ENCODE measurements at regions of chr3 and their contacts with region 1.

Region 1: GRCh38 chr3:10192953-10193691 is 28.4 kb downstream of the IRAK2 start:
- DNase-seq: peak; percentile 68
- H3K4me3 ChIP-seq: no peak overlapping the region
- H3K27ac ChIP-seq: peak overlapping the region; percentile 98
- H3K27me3 ChIP-seq: no peaks in the 10 kb centered on the region
- CTCF ChIP-seq: peak; percentile 82

Region 2: GRCh38 chr3:8663177-8664061 is 1529.7 kb before region 1 on chr3:
- CTCF ChIA-PET with region 1: no interaction called
- POLR2A ChIA-PET with region 1: no interaction called
- DNase-seq: peak; percentile 23
- H3K4me3 ChIP-seq: no peak overlapping the region
- H3K27ac ChIP-seq: no peak overlapping the region
- H3K27me3 ChIP-seq: no peaks in the 10 kb centered on the region
- CTCF ChIP-seq: peak; percentile 68

Region 3: DNA sequence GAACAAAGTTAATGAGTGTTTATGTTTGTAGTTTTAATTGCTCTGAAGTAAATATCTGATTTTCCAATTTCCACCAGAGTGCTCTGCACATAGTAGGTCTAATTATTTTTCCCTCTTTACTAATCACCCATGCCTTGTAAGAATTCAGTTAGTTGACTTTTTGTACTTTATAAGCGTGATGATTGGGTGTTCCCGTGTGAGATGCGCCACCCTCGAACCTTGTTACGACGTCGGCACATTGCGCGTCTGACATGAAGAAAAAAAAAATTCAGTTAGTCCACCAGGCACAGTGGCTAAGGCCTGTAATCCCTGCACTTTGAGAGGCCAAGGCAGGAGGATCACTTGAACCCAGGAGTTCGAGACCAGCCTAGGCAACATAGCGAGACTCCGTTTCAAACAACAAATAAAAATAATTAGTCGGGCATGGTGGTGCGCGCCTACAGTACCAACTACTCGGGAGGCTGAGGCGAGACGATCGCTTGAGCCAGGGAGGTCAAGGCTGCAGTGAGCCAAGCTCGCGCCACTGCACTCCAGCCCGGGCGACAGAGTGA is 52.1 kb before region 1 on chr3:
- CTCF ChIA-PET with region 1: interaction called, 4 read pairs
- POLR2A ChIA-PET with region 1: interaction called, 10 read pairs
- DNase-seq: no peak
- H3K4me3 ChIP-seq: peak overlapping the region; percentile 27; the same call in 1 of the 2 replicates
- H3K27ac ChIP-seq: no peak overlapping the region
- H3K27me3 ChIP-seq: no peaks in the 10 kb centered on the region
- CTCF ChIP-seq: no peak

Region 4: DNA sequence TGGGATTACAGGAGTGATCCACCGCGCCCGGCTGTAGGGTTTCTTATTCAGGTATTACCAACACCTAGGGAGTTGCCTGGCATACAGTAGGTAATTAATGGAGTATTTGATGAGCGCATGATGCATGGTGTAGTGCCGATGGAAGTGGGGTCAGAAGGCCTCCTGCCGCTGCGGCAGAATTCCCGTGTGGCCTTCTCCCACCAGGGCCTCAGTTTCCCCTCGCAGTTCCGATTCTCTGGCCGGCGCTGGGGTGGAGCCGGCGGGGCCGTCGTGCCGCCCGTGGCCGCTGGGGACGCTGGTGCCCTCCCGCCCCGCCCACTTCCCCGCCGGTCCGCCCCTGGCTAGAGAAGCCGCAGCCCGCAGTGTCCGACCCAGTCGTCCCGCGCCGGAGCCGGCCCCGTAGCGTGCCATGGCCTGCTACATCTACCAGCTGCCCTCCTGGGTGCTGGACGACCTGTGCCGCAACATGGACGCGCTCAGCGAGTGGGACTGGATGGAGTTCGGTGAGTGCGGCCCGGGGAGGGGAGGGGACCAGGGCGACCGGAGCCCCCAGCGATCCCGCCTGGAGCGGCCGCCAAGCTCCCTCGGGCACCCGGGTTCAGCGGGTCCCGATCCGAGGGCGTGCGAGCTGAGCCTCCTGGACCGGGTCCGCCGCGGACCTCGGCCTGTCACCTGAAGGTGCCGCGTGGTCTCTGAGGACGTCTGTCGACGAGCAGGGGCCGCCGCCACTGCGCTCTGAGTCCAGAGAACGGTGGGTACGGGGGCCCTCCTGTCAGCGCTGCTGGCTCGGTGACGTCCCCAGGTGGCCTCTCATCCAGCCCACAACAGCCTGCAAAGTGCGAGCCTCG is 28.4 kb before region 1 on chr3 and contains the start of gene IRAK2:
- CTCF ChIA-PET with region 1: interaction called, 15 read pairs
- POLR2A ChIA-PET with region 1: no interaction called
- DNase-seq: no peak
- H3K4me3 ChIP-seq: peak within 1 kb of the TSS; percentile 90
- H3K27ac ChIP-seq: no peak within 1 kb of the TSS
- H3K27me3 ChIP-seq: no peaks in the 10 kb centered on the region
- CTCF ChIP-seq: peak; percentile 61
- polyA plus RNA-seq, gene IRAK2: 7.6 and 8.9 TPM in 2 replicates

Region 5: DNA sequence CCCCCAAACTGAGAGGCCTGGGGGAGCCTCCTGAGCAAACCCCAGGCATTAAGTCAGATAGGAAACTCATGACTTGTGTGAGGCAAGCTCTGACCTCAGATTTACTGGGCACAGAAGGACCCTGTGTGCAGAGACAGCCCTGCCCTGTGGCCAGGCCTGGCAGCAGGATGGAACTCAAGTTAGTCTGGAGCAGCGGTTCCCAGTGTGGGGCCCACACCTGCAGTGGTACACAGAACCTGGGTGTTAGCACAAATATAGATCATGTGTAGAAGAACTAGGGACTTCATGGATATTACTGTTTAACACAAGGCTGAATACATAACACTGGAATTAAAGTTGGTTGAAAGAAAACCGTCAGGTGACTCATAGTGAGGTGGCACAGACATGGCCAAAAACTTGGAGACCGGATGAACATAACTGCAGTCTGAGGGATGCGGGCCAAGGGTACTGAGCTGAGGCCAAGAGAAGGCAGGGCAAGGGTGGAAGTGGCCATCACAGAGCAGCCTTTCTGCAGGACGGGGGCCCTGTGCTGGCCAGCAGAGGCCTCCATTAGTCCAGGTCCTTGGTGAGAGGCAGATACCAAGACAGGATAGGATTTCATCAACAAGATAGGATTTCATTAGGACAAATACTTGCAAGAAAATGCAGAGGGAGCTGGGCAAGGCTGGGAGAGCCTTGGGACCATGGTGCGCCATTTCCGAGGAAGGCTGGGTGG is 12.5 kb after region 1 on chr3:
- CTCF ChIA-PET with region 1: interaction called, 29 read pairs
- POLR2A ChIA-PET with region 1: interaction called, 32 read pairs
- DNase-seq: no peak
- H3K4me3 ChIP-seq: no peak overlapping the region
- H3K27ac ChIP-seq: peak overlapping the region; percentile 94
- H3K27me3 ChIP-seq: no peaks in the 10 kb centered on the region
- CTCF ChIP-seq: no peak

Region 6: DNA sequence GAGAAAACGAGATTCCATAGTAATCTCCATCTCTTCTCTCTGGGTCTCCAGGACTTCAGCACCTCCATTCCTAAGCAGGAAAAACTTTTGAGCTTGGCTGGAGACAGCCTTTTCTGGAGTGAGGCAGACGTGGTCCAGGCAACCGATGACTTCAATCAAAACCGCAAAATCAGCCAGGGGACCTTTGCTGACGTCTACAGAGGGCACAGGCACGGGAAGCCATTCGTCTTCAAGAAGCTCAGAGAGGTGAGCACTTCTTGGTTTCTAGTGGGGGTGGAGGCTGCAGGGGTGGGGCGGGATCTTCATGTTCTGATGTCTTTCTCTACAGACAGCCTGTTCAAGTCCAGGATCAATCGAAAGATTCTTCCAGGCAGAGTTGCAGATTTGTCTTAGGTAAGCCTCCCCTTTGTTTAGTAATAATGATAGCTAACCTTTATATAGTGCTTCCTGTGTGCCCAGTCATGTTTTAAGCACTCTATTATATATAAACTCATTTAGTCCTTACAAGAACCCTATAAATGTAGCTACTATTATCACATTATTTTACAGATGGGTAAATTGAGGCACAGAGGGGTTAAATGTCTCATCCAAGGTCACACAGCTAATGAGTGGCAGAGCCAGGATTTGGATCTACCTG is 20.2 kb after region 1 on chr3:
- CTCF ChIA-PET with region 1: interaction called, 14 read pairs
- POLR2A ChIA-PET with region 1: no interaction called
- DNase-seq: no peak
- H3K4me3 ChIP-seq: no peak overlapping the region
- H3K27ac ChIP-seq: peak overlapping the region; percentile 3
- H3K27me3 ChIP-seq: no peaks in the 10 kb centered on the region
- CTCF ChIP-seq: no peak

Region 7: DNA sequence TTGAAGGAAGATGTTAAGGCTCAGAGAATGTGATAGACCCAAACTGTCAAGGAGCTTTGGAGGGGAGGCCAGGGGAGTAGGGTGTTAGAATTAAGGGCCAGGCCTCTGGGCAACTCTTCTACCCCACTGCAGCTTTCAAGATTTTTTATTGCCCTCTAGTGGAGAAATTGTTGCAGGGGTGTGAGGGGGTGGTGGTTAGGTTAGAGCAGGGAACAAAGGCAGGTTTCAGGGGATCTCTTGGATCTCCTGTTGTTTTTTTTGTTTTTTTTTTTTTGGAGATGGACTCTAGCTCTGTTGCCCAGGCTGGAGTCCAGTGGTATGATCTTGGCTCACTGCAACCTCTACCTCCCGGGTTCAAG is 129.2 kb after region 1 on chr3:
- CTCF ChIA-PET with region 1: no interaction called
- POLR2A ChIA-PET with region 1: no interaction called
- DNase-seq: no peak
- H3K4me3 ChIP-seq: no peak overlapping the region
- H3K27ac ChIP-seq: no peak overlapping the region
- H3K27me3 ChIP-seq: peaks cover 16% of the 10 kb centered on the region
- CTCF ChIP-seq: peak; percentile 28; the same call in 1 of the 2 replicates

Region 8: DNA sequence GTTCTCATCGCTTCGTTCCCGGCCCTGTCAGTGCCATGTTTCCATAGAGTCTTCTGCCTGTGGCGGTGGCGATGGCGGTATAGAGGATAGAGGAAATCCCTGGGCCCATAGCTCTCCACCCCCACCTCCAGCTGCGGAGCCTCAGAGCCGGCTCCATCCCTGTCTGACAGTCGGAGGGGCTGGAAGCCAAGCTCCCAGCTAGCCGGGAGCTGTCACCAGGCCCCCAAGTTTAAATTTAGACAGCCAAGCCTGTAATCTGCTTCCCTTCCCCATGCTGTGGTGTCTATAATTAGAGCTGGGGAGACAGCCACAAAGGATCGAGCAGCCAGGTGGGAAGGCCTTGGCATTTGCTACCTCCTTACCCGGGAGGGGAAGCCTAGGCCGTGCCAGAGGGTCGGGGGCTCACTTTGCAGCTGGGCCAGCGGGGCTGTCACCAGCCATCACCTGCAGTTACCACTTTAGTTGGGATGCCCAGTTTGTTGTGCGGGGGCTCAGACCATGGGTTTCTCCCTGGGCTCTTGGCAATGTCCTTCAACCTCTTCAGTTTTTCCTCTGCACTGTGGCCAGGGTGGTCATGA is 184.1 kb after region 1 on chr3:
- CTCF ChIA-PET with region 1: no interaction called
- POLR2A ChIA-PET with region 1: no interaction called
- DNase-seq: no peak
- H3K4me3 ChIP-seq: no peak overlapping the region
- H3K27ac ChIP-seq: no peak overlapping the region
- H3K27me3 ChIP-seq: peaks cover 24% of the 10 kb centered on the region
- CTCF ChIP-seq: no peak

Region 9: DNA sequence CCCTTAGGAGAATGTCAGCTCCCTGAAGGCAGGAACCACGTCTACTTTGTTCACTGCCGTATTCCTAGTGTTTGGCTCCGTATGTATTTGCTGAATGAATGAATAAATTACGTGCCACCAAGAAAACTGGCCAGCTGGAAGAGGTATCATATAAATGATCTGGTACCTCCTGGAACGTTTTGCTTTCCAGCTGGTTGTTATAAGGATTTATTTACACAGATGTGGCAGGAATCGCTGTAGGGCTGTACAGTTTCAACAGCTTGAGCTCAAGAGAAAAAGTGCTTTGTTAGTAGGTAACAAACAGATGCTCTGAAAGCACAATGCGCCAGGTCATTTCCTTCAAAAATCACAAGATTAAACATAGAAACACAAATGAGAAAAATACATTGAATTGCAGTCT is 421.0 kb after region 1 on chr3:
- CTCF ChIA-PET with region 1: no interaction called
- POLR2A ChIA-PET with region 1: no interaction called
- DNase-seq: no peak
- H3K4me3 ChIP-seq: no peak overlapping the region
- H3K27ac ChIP-seq: no peak overlapping the region
- H3K27me3 ChIP-seq: peaks cover 8% of the 10 kb centered on the region
- CTCF ChIP-seq: no peak

Measured in AG04450 (cell line).